ENCODE measurements at regions of chr6 and their contacts with region 1.

Region 1: DNA sequence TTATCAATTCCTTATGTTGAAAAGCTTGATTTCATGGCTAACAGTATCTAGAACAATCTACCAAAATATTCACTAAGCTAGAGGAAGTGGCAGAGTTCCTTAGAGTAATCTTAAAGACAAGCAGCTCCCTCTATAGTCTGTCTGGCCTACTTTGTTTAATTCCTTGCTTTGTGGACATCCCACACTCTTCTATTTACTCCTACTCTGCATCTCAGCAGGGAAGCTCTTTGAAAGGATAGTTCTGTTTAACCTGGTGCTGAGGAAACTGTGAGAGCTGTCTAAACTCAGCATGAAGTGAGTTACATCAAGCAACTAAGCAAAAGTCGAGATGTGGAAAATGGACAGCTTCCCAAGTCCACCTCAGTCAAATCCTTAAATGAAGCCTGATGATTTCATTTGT is 4.3 kb downstream of the REV3L start:
- DNase-seq: peak; percentile 70
- H3K4me3 ChIP-seq: no peak overlapping the region
- H3K27ac ChIP-seq: peak overlapping the region; percentile 10
- H3K4me1 ChIP-seq: peaks cover 29% of the 10 kb centered on the region
- H3K27me3 ChIP-seq: no peaks in the 10 kb centered on the region
- CTCF ChIP-seq: peak in 1 of 2 donors; percentile 24
- POLR2A ChIP-seq: no peak

Region 2: DNA sequence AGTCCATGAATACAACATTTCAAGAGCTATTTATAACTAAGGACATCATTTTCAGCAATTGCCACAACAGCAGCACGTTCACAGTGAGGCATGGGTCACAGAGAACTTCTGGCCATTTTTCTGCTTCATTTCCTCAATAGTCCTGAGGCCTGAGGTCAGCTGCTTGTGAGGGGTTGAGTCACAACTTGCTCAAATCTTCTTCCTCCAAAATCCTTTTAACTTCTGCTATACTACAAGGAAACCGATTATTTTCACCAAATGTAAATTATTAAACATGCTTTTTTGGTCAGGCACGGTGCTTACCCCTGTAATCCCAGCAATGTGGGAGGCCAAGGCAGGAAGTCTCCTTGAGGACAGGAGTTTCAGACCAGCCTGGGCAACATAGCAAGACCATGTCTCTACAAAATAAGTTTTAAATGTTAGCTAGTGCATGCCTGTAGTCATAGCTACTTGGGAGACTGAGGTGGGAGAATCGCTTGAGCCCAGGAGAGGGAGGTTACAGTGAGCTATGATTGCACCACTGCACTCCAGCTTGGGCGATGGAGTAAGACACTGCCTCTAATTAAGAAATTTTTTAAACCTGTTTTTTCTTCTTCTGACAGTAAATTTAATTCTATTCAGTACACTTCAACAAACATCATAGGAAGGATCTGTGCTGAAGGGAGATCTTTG is 402.6 kb before region 1 on chr6:
- CTCF ChIA-PET with region 1: no interaction called
- POLR2A ChIA-PET with region 1: no interaction called
- dilution Hi-C with region 1: no loop called
- intact Hi-C with region 1: no loop called
- DNase-seq: no peak
- H3K4me3 ChIP-seq: no peak overlapping the region
- H3K27ac ChIP-seq: no peak overlapping the region
- H3K4me1 ChIP-seq: no peaks in the 10 kb centered on the region
- H3K27me3 ChIP-seq: peaks cover 9 to 16% of the 10 kb centered on the region in 2 experiments
- CTCF ChIP-seq: no peak
- POLR2A ChIP-seq: no peak

Region 3: DNA sequence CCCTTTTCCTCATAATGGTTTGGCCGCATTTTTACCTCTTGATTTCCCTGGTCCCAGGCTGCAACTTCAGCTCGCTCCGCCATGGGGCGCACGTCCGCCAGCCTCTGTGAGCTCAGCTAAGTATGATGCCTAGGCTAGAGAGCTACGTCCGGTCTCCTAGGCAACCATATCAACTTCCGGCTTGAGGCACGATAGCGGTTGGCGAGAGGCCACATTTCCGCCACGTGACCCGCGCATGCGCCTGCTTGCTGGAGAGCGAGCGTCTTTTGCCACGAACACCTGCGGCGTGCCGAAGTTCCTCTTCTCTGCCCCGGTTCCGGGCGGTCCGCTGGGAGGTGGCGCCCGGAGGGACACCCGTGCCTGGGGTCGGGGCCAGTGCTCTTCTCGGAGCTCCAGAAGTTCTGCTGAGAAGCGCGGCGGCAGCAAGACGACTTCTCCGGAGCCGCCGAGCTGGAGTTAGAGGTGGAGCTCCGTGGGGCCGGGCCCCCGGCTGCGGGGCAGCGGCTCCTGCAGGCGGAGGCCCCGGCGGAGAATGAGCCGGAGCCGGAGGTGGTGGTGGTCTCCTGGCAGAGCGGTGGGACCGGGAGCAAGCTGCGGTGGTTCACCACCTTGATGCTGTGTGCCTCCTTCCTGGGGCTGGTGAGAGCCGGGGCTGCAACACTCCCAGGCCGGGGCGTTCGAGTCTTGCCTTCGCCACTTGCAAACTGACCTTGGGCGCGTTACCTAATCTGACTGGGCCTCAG is 219.5 kb before region 1 on chr6:
- CTCF ChIA-PET with region 1: interaction called, 73 read pairs
- POLR2A ChIA-PET with region 1: interaction called, 6 read pairs
- dilution Hi-C with region 1: no loop called
- intact Hi-C with region 1: loop called (anchors 1 kb)
- DNase-seq: peak; percentile 99
- H3K4me3 ChIP-seq: peak overlapping the region; percentile 41 to 68 (median 47)
- H3K27ac ChIP-seq: peak overlapping the region; percentile 55
- H3K4me1 ChIP-seq: peaks cover 11% of the 10 kb centered on the region
- H3K27me3 ChIP-seq: peaks cover 11 to 25% of the 10 kb centered on the region in 2 experiments
- CTCF ChIP-seq: peak; percentile 89 to 98
- POLR2A ChIP-seq: peak; percentile 81

Region 4: GRCh38 chr6:111361648-111362047 is 117.1 kb before region 1 on chr6:
- CTCF ChIA-PET with region 1: interaction called, 98 read pairs
- POLR2A ChIA-PET with region 1: no interaction called
- dilution Hi-C with region 1: no loop called
- intact Hi-C with region 1: loop called (anchors 1 kb)
- DNase-seq: peak; percentile 46
- H3K4me3 ChIP-seq: no peak overlapping the region
- H3K27ac ChIP-seq: no peak overlapping the region
- H3K4me1 ChIP-seq: no peaks in the 10 kb centered on the region
- H3K27me3 ChIP-seq: no peaks in the 10 kb centered on the region
- CTCF ChIP-seq: peak; percentile 22 to 48
- POLR2A ChIP-seq: no peak

Region 5: DNA sequence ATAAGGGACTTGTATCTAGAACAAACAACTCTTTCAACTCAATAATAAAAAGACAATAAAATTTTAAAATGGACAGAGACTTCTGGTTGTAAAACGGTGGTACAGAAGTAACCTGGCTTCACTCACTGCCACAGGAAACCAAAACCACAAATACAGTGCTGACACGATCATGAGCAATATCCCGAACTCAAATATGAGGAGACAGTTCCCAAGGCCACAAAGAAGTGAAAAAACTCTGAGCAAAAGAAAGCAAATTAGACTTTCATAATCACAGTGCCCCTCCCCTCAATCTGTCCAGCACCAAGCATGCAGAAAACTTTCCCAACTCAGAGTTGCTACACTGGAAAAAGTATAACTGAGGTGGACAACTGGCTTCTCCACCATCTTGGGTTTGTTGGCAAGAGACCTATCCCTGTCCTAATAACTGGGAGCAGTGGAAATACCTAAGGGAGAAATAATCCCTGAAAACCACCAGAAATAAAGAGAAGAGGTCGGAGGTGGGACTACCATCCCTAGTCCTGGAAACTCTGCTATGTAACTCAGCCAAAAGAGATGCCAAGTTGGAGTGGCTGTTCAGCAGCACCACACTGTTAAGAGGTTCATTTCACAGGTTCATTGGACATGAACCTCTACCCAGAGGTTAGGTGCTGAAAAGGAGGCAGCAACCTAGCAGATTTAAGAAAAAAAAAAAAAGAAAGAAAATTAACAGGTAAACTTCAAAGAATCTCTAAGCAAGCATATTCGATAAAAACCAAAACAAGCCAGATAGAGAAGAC is 51.2 kb before region 1 on chr6:
- CTCF ChIA-PET with region 1: interaction called, 25 read pairs
- POLR2A ChIA-PET with region 1: no interaction called
- dilution Hi-C with region 1: no loop called
- intact Hi-C with region 1: no loop called
- DNase-seq: peak; percentile 90
- H3K4me3 ChIP-seq: peak overlapping the region in 2 of 3 experiments; percentile 16 to 23
- H3K27ac ChIP-seq: peak overlapping the region; percentile 93
- H3K4me1 ChIP-seq: peaks cover 48% of the 10 kb centered on the region
- H3K27me3 ChIP-seq: no peaks in the 10 kb centered on the region
- CTCF ChIP-seq: no peak
- POLR2A ChIP-seq: no peak

Region 6: GRCh38 chr6:111605100-111605751 is 126.5 kb after region 1 on chr6:
- CTCF ChIA-PET with region 1: interaction called, 11 read pairs
- POLR2A ChIA-PET with region 1: interaction called, 5 read pairs
- dilution Hi-C with region 1: no loop called
- intact Hi-C with region 1: no loop called
- DNase-seq: peak; percentile 77
- H3K4me3 ChIP-seq: peak overlapping the region; percentile 37 to 44 (median 38)
- H3K27ac ChIP-seq: peak overlapping the region; percentile 92
- H3K4me1 ChIP-seq: peaks cover 59% of the 10 kb centered on the region
- H3K27me3 ChIP-seq: no peaks in the 10 kb centered on the region
- CTCF ChIP-seq: no peak
- POLR2A ChIP-seq: no peak